ENCODE measurements at regions of chr2 and their contacts with region 1.

Region 1: GRCh38 chr2:97697252-97698235 is 15.8 kb upstream of the ZAP70 start:
- DNase-seq: peak; percentile 96
- ATAC-seq: peak; percentile 93
- H3K4me3 Mint-ChIP-seq: peak overlapping the region; percentile 10
- H3K27ac Mint-ChIP-seq: no peak overlapping the region
- H3K4me1 Mint-ChIP-seq: peaks cover 13% of the 10 kb centered on the region
- H3K27me3 Mint-ChIP-seq: peaks cover 2% of the 10 kb centered on the region

Region 2: DNA sequence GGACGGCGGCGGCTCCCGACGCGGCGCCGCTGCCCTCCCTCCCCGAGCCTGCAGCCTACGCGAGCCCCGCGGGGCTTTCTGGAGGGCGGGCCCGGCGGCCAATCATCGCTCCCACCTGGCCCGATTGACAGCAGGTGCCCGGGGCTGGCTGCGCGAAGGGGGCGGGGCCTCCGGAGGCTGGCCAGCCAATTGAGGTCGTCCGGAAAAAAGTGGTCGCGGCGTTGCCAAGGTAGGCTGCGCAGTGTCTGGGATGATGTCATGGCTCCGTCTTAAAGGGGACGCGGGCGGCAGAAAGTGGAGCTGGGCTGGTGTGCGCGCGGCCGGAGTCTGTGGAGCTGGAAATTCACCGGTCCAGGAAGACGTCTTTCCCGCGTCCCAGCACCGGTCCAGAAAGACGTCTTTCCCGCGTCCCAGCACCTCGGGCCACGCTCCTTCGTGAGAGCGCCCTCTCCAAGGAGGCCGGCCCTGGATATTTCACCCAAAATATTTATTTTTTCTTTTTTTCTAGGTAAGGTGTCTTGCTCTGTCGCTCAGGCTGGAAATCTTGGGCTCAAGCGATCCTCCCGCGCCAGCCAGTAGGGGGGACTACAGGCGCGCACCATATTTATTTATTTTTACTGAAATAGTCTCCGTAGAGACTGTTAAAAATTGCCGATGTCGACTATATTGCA is 33.4 kb before region 1 on chr2 and contains the start of gene ACTR1B:
- CTCF ChIA-PET with region 1: interaction called, 84 read pairs
- POLR2A ChIA-PET with region 1: interaction called, 20 read pairs
- DNase-seq: peak; percentile 98
- ATAC-seq: peak; percentile 92
- H3K4me3 Mint-ChIP-seq: peak within 1 kb of the TSS; percentile 98
- H3K27ac Mint-ChIP-seq: peak within 1 kb of the TSS; percentile 99
- H3K4me1 Mint-ChIP-seq: peaks cover 32% of the 10 kb centered on the region
- H3K27me3 Mint-ChIP-seq: no peaks in the 10 kb centered on the region
- total RNA-seq, gene ACTR1B: 73.2 to 74.3 TPM

Region 3: GRCh38 chr2:97718051-97718882 is 20.7 kb after region 1 on chr2:
- CTCF ChIA-PET with region 1: interaction called, 130 read pairs
- POLR2A ChIA-PET with region 1: interaction called, 14 read pairs
- DNase-seq: peak; percentile 90
- ATAC-seq: peak; percentile 77
- H3K4me3 Mint-ChIP-seq: peak overlapping the region; percentile 93
- H3K27ac Mint-ChIP-seq: peak overlapping the region; percentile 98
- H3K4me1 Mint-ChIP-seq: peaks cover 78% of the 10 kb centered on the region
- H3K27me3 Mint-ChIP-seq: no peaks in the 10 kb centered on the region

Region 4: GRCh38 chr2:97751752-97752151 is 54.2 kb after region 1 on chr2:
- CTCF ChIA-PET with region 1: interaction called, 80 read pairs
- POLR2A ChIA-PET with region 1: no interaction called
- DNase-seq: no peak
- ATAC-seq: no peak
- H3K4me3 Mint-ChIP-seq: no peak overlapping the region
- H3K27ac Mint-ChIP-seq: no peak overlapping the region
- H3K4me1 Mint-ChIP-seq: peaks cover 18% of the 10 kb centered on the region
- H3K27me3 Mint-ChIP-seq: no peaks in the 10 kb centered on the region